Common myeloid progenitor, CD34-positive (primary cell): ENCODE measurements at regions of chr2 and their contacts with region 1.

Region 1: GRCh38 chr2:151805961-151806360 is 22.3 kb downstream of the ARL5A start:
- DNase-seq: no peak
- H3K4me3 ChIP-seq: no peak overlapping the region
- H3K27ac ChIP-seq: no peak overlapping the region
- H3K4me1 ChIP-seq: peaks cover 0 to 6% (median 1%) of the 10 kb centered on the region in 4 experiments
- H3K27me3 ChIP-seq: no peaks in the 10 kb centered on the region

Region 2: GRCh38 chr2:151238527-151239487 is 567.2 kb before region 1 on chr2:
- CTCF ChIA-PET with region 1: no interaction called
- POLR2A ChIA-PET with region 1: no interaction called
- DNase-seq: peak; percentile 73 to 88 (median 87)
- H3K4me3 ChIP-seq: no peak overlapping the region
- H3K27ac ChIP-seq: no peak overlapping the region
- H3K4me1 ChIP-seq: no peaks in the 10 kb centered on the region
- H3K27me3 ChIP-seq: no peaks in the 10 kb centered on the region

Region 3: DNA sequence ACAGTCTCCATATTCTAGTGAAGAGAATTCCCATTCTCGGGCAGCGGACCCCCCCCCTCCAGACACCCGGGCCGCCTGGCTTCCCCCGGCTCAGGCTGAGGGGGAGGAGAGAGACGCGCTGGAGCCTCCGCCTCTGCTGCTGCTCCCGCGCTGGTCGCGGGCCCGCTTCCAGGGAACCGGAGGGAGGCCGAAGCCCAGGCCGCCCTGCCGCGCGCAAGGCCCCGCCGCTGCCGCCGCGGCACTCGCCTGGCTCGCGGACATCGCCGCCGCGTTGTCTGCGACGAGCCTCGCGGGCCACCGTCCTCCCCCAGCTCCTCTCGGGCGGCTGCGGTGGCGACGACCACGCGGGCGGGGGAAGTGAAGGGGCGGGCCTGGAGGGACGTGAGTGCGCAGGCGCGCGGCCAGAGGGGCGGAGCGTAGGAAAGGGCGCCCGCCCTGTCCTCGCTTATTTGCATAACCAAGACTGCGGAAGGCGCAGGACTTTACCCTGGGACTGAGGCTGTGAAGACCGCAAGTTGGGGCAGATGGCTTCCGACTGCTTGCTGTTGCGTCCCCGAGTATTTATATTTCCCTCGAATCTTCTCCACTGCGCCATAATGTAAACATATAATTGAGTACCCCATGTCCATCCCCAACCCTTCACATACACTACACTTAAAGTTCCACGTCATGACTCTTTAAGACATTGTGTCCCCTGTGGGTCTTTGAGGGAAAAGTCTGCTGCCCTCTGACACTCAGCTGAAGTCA is 22.4 kb after region 1 on chr2 and contains the start of gene ARL5A:
- CTCF ChIA-PET with region 1: interaction called, 15 read pairs
- POLR2A ChIA-PET with region 1: no interaction called
- DNase-seq: peak; percentile 97 to 99 (median 98)
- H3K4me3 ChIP-seq: peak within 1 kb of the TSS; percentile 81 to 99 (median 91)
- H3K27ac ChIP-seq: peak within 1 kb of the TSS; percentile 67 to 88
- H3K4me1 ChIP-seq: peaks cover 5 to 24% (median 15%) of the 10 kb centered on the region in 4 experiments
- H3K27me3 ChIP-seq: no peaks in the 10 kb centered on the region

Region 4: GRCh38 chr2:151973901-151974199 is 167.9 kb after region 1 on chr2:
- CTCF ChIA-PET with region 1: no interaction called
- POLR2A ChIA-PET with region 1: no interaction called
- DNase-seq: peak in 2 of 3 donors; percentile 32 to 45
- H3K4me3 ChIP-seq: no peak overlapping the region
- H3K27ac ChIP-seq: no peak overlapping the region
- H3K4me1 ChIP-seq: peaks cover 0 to 4% (median 0%) of the 10 kb centered on the region in 4 experiments
- H3K27me3 ChIP-seq: no peaks in the 10 kb centered on the region